Left cardiac atrium (tissue), 4 donors: ENCODE measurements at regions of chr6 and their contacts with region 1.

Region 1: DNA sequence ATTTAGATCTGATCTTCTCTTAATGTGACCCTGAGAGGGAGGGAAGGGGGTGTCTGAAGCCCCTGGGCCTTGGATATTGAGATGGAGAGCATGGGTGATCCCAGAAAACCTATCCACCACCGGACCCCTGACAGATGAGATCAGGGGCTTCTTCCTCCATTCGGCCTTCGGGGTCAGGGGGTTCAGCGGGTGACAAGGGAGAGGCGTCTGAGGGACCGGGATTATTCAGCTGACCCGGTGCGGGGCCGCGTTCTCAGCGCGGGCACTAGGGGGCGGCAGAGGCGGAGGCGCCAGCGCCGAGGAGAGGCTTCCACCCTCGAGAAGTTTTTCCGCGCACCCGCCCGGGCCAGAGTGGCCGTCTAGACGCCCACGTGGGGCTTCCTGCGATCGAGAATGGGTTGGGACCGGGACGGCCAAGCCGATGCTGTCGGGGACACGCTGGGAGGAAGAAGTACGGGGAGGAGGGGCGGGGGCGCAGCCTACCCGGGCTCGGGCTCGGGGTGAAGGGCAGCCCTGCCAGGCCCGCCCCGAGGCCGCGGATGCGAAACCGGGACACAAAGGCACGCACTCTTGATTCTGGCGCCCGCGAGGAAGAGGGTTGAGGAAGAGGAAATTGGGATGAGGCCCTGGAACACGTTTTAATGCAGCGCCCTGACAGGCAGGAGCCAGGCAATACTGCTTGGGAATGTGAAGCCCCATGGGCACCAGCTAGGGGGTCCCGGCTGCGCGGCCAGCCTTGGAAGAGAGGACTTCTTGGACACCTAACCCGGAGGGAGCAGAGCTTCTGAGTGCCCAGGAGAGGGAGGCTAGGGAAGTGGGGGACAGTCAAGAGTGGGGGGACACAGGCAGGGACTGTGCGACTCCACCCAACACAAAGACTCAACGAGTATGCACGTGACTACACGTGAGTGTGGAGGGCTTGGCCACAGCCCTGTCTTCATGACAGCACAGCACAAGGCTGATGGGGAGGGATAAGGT is 30.6 kb downstream of the COL11A2 start:
- DNase-seq: peak; percentile 88
- ATAC-seq: peak; percentile 93 to 94

Region 2: GRCh38 chr6:32920715-32921114 is 240.9 kb before region 1 on chr6:
- intact Hi-C with region 1: no loop called
- DNase-seq: no peak
- ATAC-seq: no peak

Region 3: DNA sequence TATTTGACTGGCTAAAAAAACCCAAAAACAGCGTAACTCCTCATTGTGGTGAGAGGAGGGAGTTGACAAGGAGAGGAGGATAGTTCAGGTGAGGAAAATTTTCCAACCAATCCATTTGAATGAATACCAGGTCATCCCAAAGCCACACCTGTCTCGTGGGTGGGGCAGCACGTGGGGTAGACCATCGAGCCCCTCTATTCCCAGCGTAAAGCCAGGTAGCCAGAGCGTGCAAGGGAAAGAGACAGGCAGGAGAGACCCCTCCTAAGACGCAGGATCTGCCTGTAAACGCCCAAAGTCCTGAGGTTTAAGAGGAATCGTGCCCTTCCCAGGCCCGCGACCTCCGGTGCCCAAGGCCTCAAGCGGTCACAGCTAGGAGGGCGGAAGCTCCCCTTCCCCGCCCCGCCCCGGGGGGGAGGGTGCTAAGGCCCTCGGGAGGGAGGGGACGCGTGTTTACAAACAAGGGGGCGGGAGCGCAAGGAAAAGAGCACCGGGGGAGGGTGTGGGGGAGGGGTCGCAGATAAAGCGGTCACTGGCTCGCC is 38.1 kb after region 1 on chr6:
- intact Hi-C with region 1: loop called in 1 of 2 experiments (anchors 5 kb)
- DNase-seq: peak; percentile 81
- ATAC-seq: peak; percentile 40 to 56

Region 4: GRCh38 chr6:33241968-33242367 is 80.3 kb after region 1 on chr6:
- intact Hi-C with region 1: loop called in 1 of 2 experiments (anchors 5 kb)
- DNase-seq: no peak
- ATAC-seq: no peak